ENCODE measurements at regions of chr1 and their contacts with region 1.

Region 1: GRCh38 chr1:159015440-159015909 is 5.8 kb downstream of the IFI16 start:
- DNase-seq: peak; percentile 81
- ATAC-seq: peak; percentile 83
- H3K4me3 Mint-ChIP-seq: peak overlapping the region; percentile 82
- H3K27ac Mint-ChIP-seq: peak overlapping the region; percentile 96
- H3K4me1 Mint-ChIP-seq: peaks cover 46% of the 10 kb centered on the region
- H3K27me3 Mint-ChIP-seq: no peaks in the 10 kb centered on the region

Region 2: DNA sequence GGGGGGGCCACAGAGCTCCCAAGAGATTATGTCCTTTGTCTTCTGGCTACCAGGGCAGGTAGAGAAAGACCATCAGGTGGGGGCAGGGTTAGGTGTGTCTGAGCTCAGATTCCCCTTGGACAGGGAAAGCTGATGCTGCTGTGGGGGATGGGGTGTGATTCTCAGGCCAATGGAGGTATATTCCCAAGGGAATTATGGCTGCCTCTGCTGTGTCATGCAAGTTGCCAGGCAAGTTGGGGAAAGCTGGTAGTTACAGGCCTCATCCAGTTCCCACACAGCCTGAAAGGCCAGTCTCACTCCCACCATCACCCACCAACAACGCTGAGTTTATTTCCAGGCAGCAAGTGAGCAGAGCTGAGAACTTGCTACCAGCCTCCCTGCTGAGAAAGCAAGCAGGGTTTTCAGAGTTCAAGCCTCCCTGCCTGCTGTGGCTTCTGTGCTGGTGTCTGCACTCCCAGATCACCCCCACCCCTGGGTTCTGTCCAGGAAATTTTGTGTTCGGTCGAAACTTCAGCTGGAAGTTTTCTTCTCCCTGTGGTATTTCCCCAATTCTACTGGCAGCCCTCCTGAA is 15.5 kb after region 1 on chr1:
- CTCF ChIA-PET with region 1: interaction called, 6 read pairs
- POLR2A ChIA-PET with region 1: no interaction called
- intact Hi-C with region 1: loop called in 1 of 2 experiments (anchors 2 kb)
- DNase-seq: no peak
- ATAC-seq: no peak
- H3K4me3 Mint-ChIP-seq: no peak overlapping the region
- H3K27ac Mint-ChIP-seq: no peak overlapping the region
- H3K4me1 Mint-ChIP-seq: peaks cover 52% of the 10 kb centered on the region
- H3K27me3 Mint-ChIP-seq: no peaks in the 10 kb centered on the region

Region 3: DNA sequence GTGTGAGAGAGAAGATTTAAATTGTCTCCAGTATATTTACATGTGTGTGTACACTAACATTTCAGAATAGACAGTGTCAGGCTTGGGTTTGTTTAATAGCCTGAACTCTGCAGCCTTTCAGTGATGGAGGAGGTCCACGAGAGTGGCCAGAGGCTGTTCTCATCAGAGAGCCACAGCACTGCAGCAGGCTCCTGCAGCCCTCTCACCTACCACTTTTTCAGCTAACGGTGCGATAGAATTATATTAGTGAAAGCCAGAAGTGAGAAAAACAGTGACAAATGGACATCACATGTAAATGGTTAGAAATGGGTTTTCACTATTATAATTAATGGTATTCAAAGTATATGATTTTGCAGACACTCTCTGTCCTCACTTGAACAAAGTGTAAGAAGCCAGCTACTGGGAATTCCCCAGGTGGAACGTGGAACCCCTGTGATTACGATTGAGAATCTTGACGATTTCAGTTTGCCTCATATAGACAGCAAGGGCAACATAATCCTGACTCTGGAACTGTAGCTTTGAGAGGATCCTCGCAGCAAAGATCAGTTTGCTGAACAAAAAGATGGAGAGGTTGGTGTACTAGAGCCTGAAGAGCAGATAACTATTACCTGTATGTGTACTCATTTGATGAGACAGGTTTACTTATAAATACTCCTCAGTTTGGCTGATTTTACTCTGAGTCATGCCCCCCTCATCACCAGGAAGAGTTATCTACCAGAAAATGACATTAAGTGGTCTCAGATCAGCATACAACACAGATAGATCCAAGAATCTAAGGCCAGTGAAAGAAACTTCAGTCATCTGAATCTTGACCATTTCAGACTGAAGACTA is 25.6 kb after region 1 on chr1:
- CTCF ChIA-PET with region 1: no interaction called
- POLR2A ChIA-PET with region 1: no interaction called
- intact Hi-C with region 1: no loop called
- DNase-seq: peak; percentile 28
- ATAC-seq: peak; percentile 65
- H3K4me3 Mint-ChIP-seq: no peak overlapping the region
- H3K27ac Mint-ChIP-seq: peak overlapping the region; percentile 64
- H3K4me1 Mint-ChIP-seq: peaks cover 41% of the 10 kb centered on the region
- H3K27me3 Mint-ChIP-seq: no peaks in the 10 kb centered on the region

Region 4: GRCh38 chr1:159054427-159054826 is 39.0 kb after region 1 on chr1:
- CTCF ChIA-PET with region 1: interaction called, 5 read pairs
- POLR2A ChIA-PET with region 1: no interaction called
- intact Hi-C with region 1: loop called in 1 of 2 experiments (anchors 5 kb)
- DNase-seq: no peak
- ATAC-seq: peak; percentile 6
- H3K4me3 Mint-ChIP-seq: no peak overlapping the region
- H3K27ac Mint-ChIP-seq: peak overlapping the region; percentile 49
- H3K4me1 Mint-ChIP-seq: peaks cover 32% of the 10 kb centered on the region
- H3K27me3 Mint-ChIP-seq: no peaks in the 10 kb centered on the region

Measured in activated CD4-positive, alpha-beta T cell treated with anti-CD3 and anti-CD28 coated beads for 36 hours (primary cell).